Calu3 (cell line): ENCODE measurements at regions of chr4 and their contacts with region 1.

Region 1: DNA sequence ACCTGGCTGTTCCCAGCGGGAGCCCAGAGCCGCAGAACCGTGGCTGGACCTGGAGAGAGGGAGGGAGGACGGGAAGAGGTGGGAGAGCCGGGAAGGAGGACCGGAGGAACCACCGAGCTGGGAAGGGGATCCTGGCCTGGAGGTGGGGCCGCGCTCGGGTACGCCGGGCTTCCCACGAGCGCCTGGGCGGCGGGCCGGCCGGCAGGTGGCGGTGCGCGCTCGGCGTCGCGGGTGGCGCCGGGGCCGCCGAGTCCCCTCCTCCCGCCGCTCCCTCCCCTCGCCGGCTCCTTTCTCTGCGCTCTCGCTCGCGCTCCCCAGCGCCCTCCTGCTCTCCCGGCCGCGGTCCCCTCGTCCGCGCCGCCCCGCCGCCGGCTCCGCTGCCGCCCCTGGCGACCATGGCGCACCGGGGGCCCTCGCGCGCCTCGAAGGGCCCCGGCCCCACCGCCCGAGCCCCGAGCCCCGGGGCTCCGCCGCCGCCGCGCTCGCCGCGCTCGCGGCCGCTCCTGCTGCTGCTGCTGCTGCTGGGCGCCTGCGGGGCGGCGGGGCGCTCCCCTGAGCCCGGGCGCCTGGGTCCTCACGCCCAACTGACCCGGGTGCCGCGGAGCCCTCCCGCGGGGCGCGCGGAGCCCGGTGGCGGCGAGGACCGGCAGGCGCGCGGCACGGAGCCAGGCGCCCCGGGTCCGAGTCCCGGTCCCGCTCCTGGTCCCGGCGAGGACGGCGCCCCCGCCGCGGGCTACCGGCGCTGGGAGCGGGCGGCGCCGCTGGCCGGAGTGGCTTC is at the start of gene SORCS2:
- DNase-seq: peak; percentile 74
- H3K4me3 Mint-ChIP-seq: no peak within 1 kb of the TSS
- H3K27ac Mint-ChIP-seq: no peak within 1 kb of the TSS
- H3K4me1 Mint-ChIP-seq: no peaks in the 10 kb centered on the region
- H3K27me3 Mint-ChIP-seq: peaks cover 75% of the 10 kb centered on the region
- CTCF ChIP-seq: peak; percentile 43
- total RNA-seq, gene SORCS2: not detected in 2 replicates

Region 2: DNA sequence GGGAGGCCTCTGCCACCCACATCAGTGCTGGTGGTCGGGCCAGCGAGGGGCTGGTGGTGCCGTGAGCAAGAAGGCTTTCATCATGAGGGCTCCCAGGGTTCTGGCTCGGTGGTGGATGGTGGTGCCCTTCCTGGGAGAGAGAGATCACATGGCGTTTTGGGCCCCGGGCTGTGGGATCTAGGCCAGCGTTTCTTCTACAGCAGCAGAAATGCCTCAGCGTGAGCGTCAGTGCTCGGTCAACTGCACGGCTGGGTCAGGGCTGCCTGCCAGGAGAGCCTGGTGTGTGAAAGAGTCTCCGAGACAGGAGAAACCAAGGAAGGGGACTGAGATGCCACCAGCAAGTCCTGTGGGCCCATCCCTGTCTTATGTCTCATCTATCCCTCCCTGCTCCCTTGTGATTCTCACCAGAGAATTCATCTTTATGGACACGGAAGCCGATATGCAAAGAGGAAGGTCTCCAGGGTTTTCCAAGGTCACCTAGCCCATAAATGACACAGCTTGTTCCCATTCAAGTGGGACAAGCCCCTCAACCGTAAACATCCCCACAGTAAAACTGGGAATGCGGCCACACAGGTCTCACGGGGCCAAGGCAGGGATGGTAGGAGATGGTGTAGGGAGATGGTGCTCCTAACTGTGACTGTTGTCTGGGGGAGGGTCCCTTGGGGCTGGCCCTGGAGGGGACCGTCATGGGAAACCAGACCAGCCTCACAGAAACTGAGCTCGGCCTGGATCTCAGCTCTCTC is 99.1 kb after region 1 on chr4:
- CTCF ChIA-PET with region 1: interaction called, 3 read pairs
- intact Hi-C with region 1: loop called (anchors 2 kb)
- DNase-seq: no peak
- H3K4me3 Mint-ChIP-seq: no peak overlapping the region
- H3K27ac Mint-ChIP-seq: no peak overlapping the region
- H3K4me1 Mint-ChIP-seq: no peaks in the 10 kb centered on the region
- H3K27me3 Mint-ChIP-seq: peaks cover 77% of the 10 kb centered on the region
- CTCF ChIP-seq: no peak

Region 3: GRCh38 chr4:7323872-7324650 is 131.6 kb after region 1 on chr4:
- CTCF ChIA-PET with region 1: no interaction called
- intact Hi-C with region 1: no loop called
- DNase-seq: no peak
- H3K4me3 Mint-ChIP-seq: no peak overlapping the region
- H3K27ac Mint-ChIP-seq: no peak overlapping the region
- H3K4me1 Mint-ChIP-seq: no peaks in the 10 kb centered on the region
- H3K27me3 Mint-ChIP-seq: peaks cover 52% of the 10 kb centered on the region
- CTCF ChIP-seq: no peak

Region 4: DNA sequence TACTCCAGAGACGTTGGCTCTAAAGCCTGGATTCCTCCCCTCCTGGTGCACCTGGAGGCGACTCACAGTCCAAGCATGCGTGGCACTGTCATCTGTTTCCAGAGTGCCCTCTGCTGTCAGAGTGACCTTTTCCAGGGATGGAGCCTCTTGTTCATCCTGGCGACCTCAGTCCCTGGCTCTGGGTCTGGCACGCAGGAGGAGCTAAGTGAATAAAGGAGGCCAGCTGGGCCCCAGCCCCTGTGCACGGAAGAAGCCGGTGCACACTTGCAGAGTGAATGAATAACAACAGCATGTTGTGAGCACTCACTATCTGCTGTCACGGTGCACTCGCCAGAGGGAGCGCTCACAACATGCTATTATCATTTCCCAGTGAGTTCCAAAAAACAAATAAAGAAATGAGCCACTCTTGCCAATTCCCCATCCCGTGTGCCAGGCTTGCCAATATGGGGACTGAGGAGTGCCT is 270.1 kb after region 1 on chr4:
- CTCF ChIA-PET with region 1: no interaction called
- intact Hi-C with region 1: loop called (anchors 5 kb)
- DNase-seq: peak; percentile 55
- H3K4me3 Mint-ChIP-seq: no peak overlapping the region
- H3K27ac Mint-ChIP-seq: no peak overlapping the region
- H3K4me1 Mint-ChIP-seq: no peaks in the 10 kb centered on the region
- H3K27me3 Mint-ChIP-seq: peaks cover 26% of the 10 kb centered on the region
- CTCF ChIP-seq: no peak

Region 5: GRCh38 chr4:7719354-7720174 is 527.1 kb after region 1 on chr4:
- CTCF ChIA-PET with region 1: no interaction called
- intact Hi-C with region 1: loop called (anchors 5 kb)
- DNase-seq: peak; percentile 72
- H3K4me3 Mint-ChIP-seq: no peak overlapping the region
- H3K27ac Mint-ChIP-seq: no peak overlapping the region
- H3K4me1 Mint-ChIP-seq: no peaks in the 10 kb centered on the region
- H3K27me3 Mint-ChIP-seq: peaks cover 93% of the 10 kb centered on the region
- CTCF ChIP-seq: peak; percentile 50